MCF 10A (cell line): ENCODE measurements at regions of chr3 and their contacts with region 1.

Region 1: DNA sequence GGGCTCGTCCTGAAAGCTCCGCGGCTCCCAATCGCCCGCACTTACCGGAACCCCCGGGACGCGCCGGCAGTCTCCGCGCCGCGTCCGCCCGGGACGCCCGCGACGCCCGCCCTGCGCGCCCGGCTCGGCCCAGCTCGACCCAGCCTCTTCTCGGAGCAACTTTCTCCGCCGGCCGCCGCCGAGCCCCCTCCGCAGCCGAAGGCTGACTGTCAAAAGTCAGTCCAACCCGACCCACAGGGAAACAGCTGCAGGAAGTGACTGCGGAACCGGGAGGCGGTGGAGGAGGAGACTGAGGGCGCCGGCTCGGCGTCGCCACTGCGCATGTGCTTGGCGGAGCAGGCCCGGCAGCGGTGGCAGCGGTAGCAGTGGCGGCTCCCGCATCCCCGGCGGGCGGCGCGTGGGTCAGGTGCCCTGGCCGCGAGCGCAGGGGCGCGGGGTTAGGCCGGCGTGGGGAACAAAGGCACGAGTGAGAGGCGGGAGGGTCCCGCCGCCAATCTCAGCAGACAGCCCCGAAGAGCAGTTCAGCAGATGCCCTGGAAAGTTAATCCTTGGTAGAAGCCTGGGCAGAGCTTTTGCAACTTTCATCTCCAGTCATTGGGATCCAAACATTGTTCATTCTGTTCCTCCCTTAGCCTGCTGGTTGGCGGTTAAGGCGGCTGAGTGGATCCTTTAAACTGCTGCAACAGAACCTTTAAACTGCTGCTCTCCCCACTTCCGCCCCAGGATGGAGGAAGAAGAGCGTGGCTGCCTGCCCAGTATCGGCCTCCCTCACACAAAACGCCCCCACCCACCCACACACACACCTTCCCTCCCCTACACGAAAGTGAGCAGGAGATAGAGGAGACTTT is at the start of gene ZMAT3:
- DNase-seq: peak; percentile 79
- H3K4me3 Mint-ChIP-seq: peak within 1 kb of the TSS; percentile 93
- H3K27ac Mint-ChIP-seq: peak within 1 kb of the TSS; percentile 90
- H3K4me1 Mint-ChIP-seq: peaks cover 20% of the 10 kb centered on the region
- H3K27me3 Mint-ChIP-seq: no peaks in the 10 kb centered on the region
- CTCF ChIP-seq: no peak
- total RNA-seq, gene ZMAT3: 50.9 and 58.0 TPM in 2 replicates

Region 2: GRCh38 chr3:178810181-178810580 is 261.6 kb before region 1 on chr3:
- CTCF ChIA-PET with region 1: no interaction called
- POLR2A ChIA-PET with region 1: no interaction called
- intact Hi-C with region 1: no loop called
- DNase-seq: no peak
- H3K4me3 Mint-ChIP-seq: no peak overlapping the region
- H3K27ac Mint-ChIP-seq: no peak overlapping the region
- H3K4me1 Mint-ChIP-seq: no peaks in the 10 kb centered on the region
- H3K27me3 Mint-ChIP-seq: no peaks in the 10 kb centered on the region
- CTCF ChIP-seq: no peak

Region 3: GRCh38 chr3:178833695-178834094 is 238.1 kb before region 1 on chr3:
- CTCF ChIA-PET with region 1: no interaction called
- POLR2A ChIA-PET with region 1: no interaction called
- intact Hi-C with region 1: no loop called
- DNase-seq: no peak
- H3K4me3 Mint-ChIP-seq: no peak overlapping the region
- H3K27ac Mint-ChIP-seq: no peak overlapping the region
- H3K4me1 Mint-ChIP-seq: no peaks in the 10 kb centered on the region
- H3K27me3 Mint-ChIP-seq: no peaks in the 10 kb centered on the region
- CTCF ChIP-seq: no peak

Region 4: GRCh38 chr3:179037351-179037750 is 34.4 kb before region 1 on chr3:
- CTCF ChIA-PET with region 1: interaction called, 13 read pairs
- POLR2A ChIA-PET with region 1: interaction called, 32 read pairs
- intact Hi-C with region 1: no loop called
- DNase-seq: peak; percentile 96
- H3K4me3 Mint-ChIP-seq: no peak overlapping the region
- H3K27ac Mint-ChIP-seq: peak overlapping the region; percentile 92
- H3K4me1 Mint-ChIP-seq: no peaks in the 10 kb centered on the region
- H3K27me3 Mint-ChIP-seq: no peaks in the 10 kb centered on the region
- CTCF ChIP-seq: no peak

Region 5: DNA sequence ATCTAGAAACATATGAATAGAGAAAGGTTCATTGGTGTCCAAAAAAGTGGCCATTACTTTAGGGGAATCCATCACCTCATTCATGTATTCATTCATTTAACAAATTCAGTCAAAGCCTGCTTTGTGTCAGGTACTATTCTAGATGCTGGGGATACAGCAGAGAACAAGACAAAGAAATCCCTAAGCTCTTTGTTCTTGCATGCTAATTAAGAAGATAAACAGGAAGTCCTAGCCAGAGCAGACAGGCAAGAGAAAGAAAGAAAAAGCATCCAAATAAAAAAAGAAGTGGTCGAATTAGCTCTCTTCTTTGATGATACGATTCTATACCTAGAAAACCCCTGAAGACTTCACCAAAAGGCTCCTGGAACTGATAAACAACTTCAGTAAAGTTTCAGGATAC is 12.2 kb after region 1 on chr3:
- CTCF ChIA-PET with region 1: interaction called, 16 read pairs
- POLR2A ChIA-PET with region 1: interaction called, 37 read pairs
- intact Hi-C with region 1: no loop called
- DNase-seq: no peak
- H3K4me3 Mint-ChIP-seq: no peak overlapping the region
- H3K27ac Mint-ChIP-seq: no peak overlapping the region
- H3K4me1 Mint-ChIP-seq: no peaks in the 10 kb centered on the region
- H3K27me3 Mint-ChIP-seq: no peaks in the 10 kb centered on the region
- CTCF ChIP-seq: no peak

Region 6: DNA sequence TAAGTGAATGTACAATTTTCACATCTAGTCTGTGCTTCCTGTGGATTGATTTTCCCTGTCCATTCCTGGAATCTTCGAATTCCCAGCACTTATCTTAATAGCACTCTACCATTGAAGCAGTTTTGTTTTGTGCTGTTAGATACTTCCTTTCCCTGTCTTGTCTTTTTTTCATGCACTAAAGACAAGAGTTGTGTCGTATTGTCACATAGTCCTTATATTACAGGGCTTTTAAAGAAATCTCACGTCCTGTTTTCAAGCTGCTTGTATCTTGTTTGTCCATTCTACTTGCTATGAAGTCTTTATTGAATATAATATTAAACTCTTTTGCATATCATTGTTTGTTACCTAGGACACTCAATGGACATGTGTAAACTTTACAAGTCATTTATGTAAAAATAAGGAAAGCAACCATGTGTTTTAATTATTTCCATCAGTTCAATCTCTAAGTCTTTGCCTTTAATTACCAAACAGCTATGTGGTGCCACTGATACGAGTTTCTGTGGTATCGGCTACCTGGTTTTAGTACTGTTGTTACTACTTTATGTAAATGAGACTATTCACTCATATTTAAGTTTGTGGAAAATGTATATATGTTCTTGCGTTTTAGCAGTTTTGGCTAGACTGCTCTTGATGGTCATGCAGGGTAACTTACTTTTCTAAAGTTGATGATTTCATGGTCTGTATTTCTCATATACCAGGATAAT is 86.7 kb after region 1 on chr3:
- CTCF ChIA-PET with region 1: interaction called, 3 read pairs
- POLR2A ChIA-PET with region 1: interaction called, 22 read pairs
- intact Hi-C with region 1: no loop called
- DNase-seq: no peak
- H3K4me3 Mint-ChIP-seq: no peak overlapping the region
- H3K27ac Mint-ChIP-seq: no peak overlapping the region
- H3K4me1 Mint-ChIP-seq: peaks cover 13% of the 10 kb centered on the region
- H3K27me3 Mint-ChIP-seq: no peaks in the 10 kb centered on the region
- CTCF ChIP-seq: no peak

Region 7: GRCh38 chr3:179322286-179323196 is 250.8 kb after region 1 on chr3 and contains the start of gene ZNF639:
- CTCF ChIA-PET with region 1: interaction called, 18 read pairs
- POLR2A ChIA-PET with region 1: interaction called, 55 read pairs
- intact Hi-C with region 1: no loop called
- DNase-seq: peak; percentile 72
- H3K4me3 Mint-ChIP-seq: peak within 1 kb of the TSS; percentile 81
- H3K27ac Mint-ChIP-seq: peak within 1 kb of the TSS; percentile 90
- H3K4me1 Mint-ChIP-seq: peaks cover 20% of the 10 kb centered on the region
- H3K27me3 Mint-ChIP-seq: no peaks in the 10 kb centered on the region
- CTCF ChIP-seq: peak; percentile 68
- total RNA-seq, gene ZNF639: 35.5 and 52.8 TPM in 2 replicates